A549 (cell line): ENCODE measurements at regions of chr20 and their contacts with region 1.

Region 1: DNA sequence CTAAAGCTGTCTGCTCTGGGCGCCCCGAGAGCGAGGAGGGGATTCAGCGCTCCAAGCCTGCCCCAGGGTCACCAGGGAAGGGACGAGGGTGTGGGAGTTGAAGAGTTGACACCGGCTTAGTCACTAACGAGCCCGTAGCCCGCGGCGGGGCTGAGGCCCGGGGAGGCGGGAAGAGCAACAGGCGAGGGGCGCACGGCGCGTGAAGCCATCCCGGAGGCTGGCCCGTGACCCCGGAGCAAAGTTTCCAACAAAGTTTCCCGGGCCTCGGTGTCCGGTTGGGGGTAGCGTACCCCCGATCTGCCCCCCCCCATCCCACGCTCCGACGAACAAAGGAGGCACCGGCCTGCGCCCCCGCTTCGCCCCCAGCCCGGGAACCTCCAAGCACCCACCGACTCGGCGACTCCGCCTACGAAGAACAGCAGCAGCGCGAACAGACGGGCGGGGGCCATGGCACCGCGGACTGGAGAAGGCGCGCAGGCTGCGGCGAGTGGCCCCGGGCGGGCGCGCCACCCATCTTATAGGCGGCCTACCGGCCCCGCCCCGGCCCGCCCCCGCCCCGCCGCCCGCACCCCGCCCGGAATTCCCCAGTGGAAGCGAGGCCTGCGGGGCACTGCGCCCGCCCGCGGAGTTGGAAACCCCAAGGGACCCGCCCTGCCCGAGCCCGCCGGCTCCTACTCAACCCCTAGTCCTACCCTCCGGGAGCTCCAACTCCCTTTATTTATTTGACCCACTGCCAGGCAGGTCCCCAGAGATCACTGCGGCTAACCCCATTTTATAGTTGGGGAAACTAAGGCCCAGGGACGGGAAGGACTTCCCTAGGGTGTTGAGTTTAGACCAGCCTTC is at the start of gene SDC4:
- DNase-seq: peak; percentile 51 to 74
- ATAC-seq: peak; percentile 72 to 81
- H3K4me3 ChIP-seq: peak within 1 kb of the TSS; percentile 86
- H3K27ac ChIP-seq: peak within 1 kb of the TSS; percentile 92 to 96
- H3K4me1 ChIP-seq: peaks cover 52% of the 10 kb centered on the region
- CTCF ChIP-seq: no peak
- EP300 ChIP-seq: no peak
- POLR2A ChIP-seq: peak; percentile 99
- RAD21 ChIP-seq: no peak
- polyA plus RNA-seq, gene SDC4: 27.4 and 29.0 TPM in 2 replicates

Region 2: GRCh38 chr20:44960103-44960852 is 387.9 kb before region 1 on chr20 and contains the start of gene TOMM34:
- CTCF ChIA-PET with region 1: no interaction called
- POLR2A ChIA-PET with region 1: no interaction called
- DNase-seq: peak; percentile 93 to 96
- ATAC-seq: peak; percentile 95 to 98
- H3K4me3 ChIP-seq: peak within 1 kb of the TSS; percentile 96
- H3K27ac ChIP-seq: peak within 1 kb of the TSS; percentile 92 to 95
- H3K4me1 ChIP-seq: peaks cover 37% of the 10 kb centered on the region
- CTCF ChIP-seq: no peak
- EP300 ChIP-seq: no peak
- POLR2A ChIP-seq: peak; percentile 77
- RAD21 ChIP-seq: no peak
- polyA plus RNA-seq, gene TOMM34: 23.4 and 29.8 TPM in 2 replicates

Region 3: GRCh38 chr20:45283548-45284057 is 64.6 kb before region 1 on chr20:
- CTCF ChIA-PET with region 1: no interaction called
- POLR2A ChIA-PET with region 1: no interaction called
- DNase-seq: no peak
- ATAC-seq: 0 out of 6 replicates have a peak, but pooled peaks of 1 of the 2 experiments have one; percentile 22
- H3K4me3 ChIP-seq: no peak overlapping the region
- H3K27ac ChIP-seq: no peak overlapping the region
- H3K4me1 ChIP-seq: no peaks in the 10 kb centered on the region
- CTCF ChIP-seq: no peak
- EP300 ChIP-seq: no peak
- POLR2A ChIP-seq: no peak
- RAD21 ChIP-seq: no peak

Region 4: GRCh38 chr20:45300961-45301360 is 47.2 kb before region 1 on chr20:
- CTCF ChIA-PET with region 1: no interaction called
- POLR2A ChIA-PET with region 1: no interaction called
- DNase-seq: peak; percentile 69 to 71
- ATAC-seq: peak; percentile 86 to 99
- H3K4me3 ChIP-seq: no peak overlapping the region
- H3K27ac ChIP-seq: no peak overlapping the region
- H3K4me1 ChIP-seq: no peaks in the 10 kb centered on the region
- CTCF ChIP-seq: no peak
- EP300 ChIP-seq: no peak
- POLR2A ChIP-seq: no peak
- RAD21 ChIP-seq: no peak

Region 5: DNA sequence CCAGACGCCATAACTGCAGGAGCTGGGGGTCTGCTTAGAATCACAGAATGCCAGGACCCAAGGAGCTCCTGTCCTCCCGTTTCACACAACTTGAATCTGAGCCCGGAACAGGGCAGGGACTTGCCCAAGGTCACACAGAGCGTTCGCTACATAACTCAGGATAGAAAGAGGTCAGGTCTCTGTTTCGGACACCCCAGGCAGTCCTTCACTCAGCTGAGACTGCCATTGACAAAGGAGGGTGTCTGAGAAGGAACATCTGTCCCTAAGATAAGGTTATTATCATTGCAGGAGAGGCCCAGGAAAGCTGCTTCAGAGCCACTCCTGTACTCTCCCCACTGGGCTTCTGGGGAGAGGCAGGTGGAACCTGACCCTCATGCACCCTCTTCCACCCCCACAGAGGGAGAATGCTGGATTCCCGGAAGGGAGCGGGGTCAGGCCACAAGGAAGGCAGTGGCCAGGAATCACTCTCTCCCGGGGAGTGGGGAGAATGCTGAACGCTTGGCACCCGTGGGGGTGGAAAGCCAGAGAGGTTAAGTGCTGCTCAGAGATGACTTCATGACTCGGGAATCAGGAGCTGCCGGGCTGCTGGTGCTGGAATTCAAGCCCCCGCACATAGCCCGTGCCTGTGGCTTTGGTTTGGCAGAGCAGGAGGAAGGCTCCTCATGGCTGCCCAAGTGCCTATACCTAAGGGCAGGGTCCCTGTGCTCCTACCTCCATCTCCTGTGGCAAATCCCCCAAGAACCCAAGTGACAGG is 10.6 kb before region 1 on chr20:
- CTCF ChIA-PET with region 1: interaction called, 13 read pairs
- POLR2A ChIA-PET with region 1: interaction called, 46 read pairs
- DNase-seq: peak in 1 of 2 experiments; percentile 59
- ATAC-seq: peak; percentile 41 to 63
- H3K4me3 ChIP-seq: peak overlapping the region; percentile 0; the same call in 1 of the 3 replicates
- H3K27ac ChIP-seq: peak overlapping the region; percentile 84 to 96
- H3K4me1 ChIP-seq: peaks cover 75% of the 10 kb centered on the region
- CTCF ChIP-seq: no peak
- EP300 ChIP-seq: 0 out of 5 replicates have a peak, but pooled peaks of 1 of the 2 experiments have one; percentile 21
- POLR2A ChIP-seq: no peak
- RAD21 ChIP-seq: no peak

Region 6: DNA sequence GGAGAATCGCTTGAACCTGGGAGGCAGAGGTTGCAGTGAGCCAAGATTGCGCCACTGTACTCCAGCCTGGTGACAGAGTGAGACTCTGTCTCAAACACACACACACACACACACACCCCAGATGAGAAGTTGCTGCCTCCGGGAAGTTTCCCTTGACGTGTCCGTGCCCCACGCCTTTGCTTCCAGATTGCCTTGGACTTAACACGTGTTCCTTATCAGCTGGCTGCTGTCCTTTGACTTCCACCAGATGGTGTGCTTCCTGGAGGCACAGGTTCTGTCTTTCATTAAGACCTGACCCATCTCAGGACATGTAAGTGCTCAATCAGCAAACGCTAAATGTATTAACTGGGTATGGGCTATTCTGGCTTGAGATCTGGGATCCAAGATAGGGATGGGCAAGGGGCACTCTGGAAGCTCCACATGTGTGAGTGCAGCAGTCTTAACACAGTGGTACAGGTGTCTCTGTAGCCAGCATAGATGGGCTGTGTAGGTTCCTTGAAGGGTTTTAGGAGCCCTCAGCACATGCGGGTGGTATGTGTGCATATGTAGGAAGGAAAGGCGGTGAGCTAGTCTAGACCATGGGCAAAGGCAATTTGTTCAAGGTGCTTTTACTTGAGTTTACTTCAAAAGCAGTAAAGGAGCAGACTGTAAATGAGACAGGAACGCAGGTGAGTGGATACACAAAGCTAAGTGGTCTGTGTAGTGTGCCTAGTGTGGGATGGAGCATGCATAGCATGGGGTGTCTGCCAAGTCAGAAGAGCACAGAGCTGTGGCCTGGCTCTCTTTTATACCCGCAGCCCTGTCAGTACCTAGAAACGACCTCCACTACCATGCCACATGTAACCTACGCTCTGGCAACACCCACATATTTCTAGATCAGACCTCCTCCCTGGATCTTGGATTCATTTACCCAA is 79.3 kb after region 1 on chr20:
- CTCF ChIA-PET with region 1: no interaction called
- POLR2A ChIA-PET with region 1: no interaction called
- DNase-seq: no peak
- ATAC-seq: peak; percentile 54 to 60; a peak in 5 of 6 replicates
- H3K4me3 ChIP-seq: no peak overlapping the region
- H3K27ac ChIP-seq: no peak overlapping the region
- H3K4me1 ChIP-seq: no peaks in the 10 kb centered on the region
- CTCF ChIP-seq: no peak
- EP300 ChIP-seq: no peak
- POLR2A ChIP-seq: no peak
- RAD21 ChIP-seq: no peak